Endothelial cell of umbilical vein (primary cell): ENCODE measurements at regions of chr2 and their contacts with region 1.

Region 1: GRCh38 chr2:44955593-44956392 is 14.3 kb downstream of the SIX3 start:
- DNase-seq: peak; percentile 60
- H3K4me3 ChIP-seq: no peak overlapping the region
- H3K27ac ChIP-seq: no peak overlapping the region
- H3K4me1 ChIP-seq: peaks cover 16% of the 10 kb centered on the region
- H3K27me3 ChIP-seq: peaks cover 47 to 52% of the 10 kb centered on the region in 2 experiments
- CTCF ChIP-seq: peak; percentile 86 to 97
- POLR2A ChIP-seq: no peak

Region 2: DNA sequence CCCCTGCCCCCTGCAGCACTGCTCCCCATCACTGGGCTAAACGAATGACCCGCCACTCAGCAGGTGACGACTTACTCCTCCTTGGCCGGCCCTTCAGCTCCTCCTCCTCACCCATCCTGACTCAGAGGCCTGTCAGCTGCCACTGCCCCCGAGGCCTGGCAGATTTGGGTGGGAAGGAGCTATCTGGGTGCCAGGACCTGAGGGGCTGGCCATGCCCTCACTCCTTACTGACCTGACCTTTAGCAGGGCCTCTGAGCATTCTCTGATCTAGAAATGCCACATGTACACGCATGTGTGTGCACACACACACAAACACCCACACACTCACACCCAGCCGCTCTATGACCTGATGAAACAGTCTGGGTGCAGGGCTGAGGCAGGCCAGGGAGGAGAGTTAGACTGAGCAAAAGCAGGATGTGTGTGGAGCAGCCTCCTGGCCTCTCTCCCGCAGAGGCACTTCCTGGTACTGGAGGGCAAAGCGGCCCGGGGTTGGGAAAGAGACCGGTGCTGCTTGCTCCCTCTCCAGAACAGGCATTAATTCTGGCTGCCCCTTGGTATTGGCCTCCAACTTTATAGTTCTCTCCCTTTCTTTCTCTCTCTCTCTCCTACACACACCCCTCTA is 1797.4 kb before region 1 on chr2:
- CTCF ChIA-PET with region 1: no interaction called
- POLR2A ChIA-PET with region 1: no interaction called
- dilution Hi-C with region 1: no loop called
- intact Hi-C with region 1: no loop called
- DNase-seq: peak; percentile 87
- H3K4me3 ChIP-seq: no peak overlapping the region
- H3K27ac ChIP-seq: peak overlapping the region; percentile 23
- H3K4me1 ChIP-seq: peaks cover 13% of the 10 kb centered on the region
- H3K27me3 ChIP-seq: no peaks in the 10 kb centered on the region
- CTCF ChIP-seq: no peak
- POLR2A ChIP-seq: peak; percentile 13

Region 3: DNA sequence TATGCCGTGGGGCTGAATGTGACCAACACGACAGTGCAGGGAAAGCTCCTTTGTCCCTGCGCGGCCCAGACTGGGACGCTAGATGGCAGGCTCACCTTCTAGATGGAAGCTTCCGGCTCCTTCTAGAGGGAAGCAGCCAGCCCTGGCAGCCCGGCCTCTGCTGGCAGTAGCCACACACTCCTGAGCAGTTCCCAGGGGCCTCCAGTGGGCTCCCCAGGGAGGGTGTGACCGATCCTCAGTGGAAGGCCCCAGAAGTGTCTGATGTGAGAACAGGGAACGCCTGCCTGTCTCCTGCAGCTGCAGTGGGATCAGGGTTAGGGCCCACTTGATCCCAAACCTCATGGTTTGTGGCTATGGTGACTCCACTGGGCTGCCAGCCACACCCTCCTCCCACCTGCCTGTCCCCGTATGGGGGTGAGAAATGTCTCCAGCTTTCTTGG is 911.5 kb before region 1 on chr2:
- CTCF ChIA-PET with region 1: interaction called, 67 read pairs
- POLR2A ChIA-PET with region 1: no interaction called
- dilution Hi-C with region 1: no loop called
- intact Hi-C with region 1: loop called (anchors 1 kb)
- DNase-seq: peak; percentile 78
- H3K4me3 ChIP-seq: no peak overlapping the region
- H3K27ac ChIP-seq: no peak overlapping the region
- H3K4me1 ChIP-seq: no peaks in the 10 kb centered on the region
- H3K27me3 ChIP-seq: peaks cover 4 to 5% of the 10 kb centered on the region in 2 experiments
- CTCF ChIP-seq: peak; percentile 87 to 95
- POLR2A ChIP-seq: no peak

Region 4: GRCh38 chr2:44167940-44168680 is 787.7 kb before region 1 on chr2:
- CTCF ChIA-PET with region 1: no interaction called
- POLR2A ChIA-PET with region 1: no interaction called
- dilution Hi-C with region 1: no loop called
- intact Hi-C with region 1: loop called (anchors 2 kb)
- DNase-seq: peak; percentile 100
- H3K4me3 ChIP-seq: peak overlapping the region; percentile 38 to 82 (median 71)
- H3K27ac ChIP-seq: peak overlapping the region; percentile 97
- H3K4me1 ChIP-seq: peaks cover 15% of the 10 kb centered on the region
- H3K27me3 ChIP-seq: peaks cover 0 to 5% of the 10 kb centered on the region in 2 experiments
- CTCF ChIP-seq: no peak
- POLR2A ChIP-seq: no peak

Region 5: DNA sequence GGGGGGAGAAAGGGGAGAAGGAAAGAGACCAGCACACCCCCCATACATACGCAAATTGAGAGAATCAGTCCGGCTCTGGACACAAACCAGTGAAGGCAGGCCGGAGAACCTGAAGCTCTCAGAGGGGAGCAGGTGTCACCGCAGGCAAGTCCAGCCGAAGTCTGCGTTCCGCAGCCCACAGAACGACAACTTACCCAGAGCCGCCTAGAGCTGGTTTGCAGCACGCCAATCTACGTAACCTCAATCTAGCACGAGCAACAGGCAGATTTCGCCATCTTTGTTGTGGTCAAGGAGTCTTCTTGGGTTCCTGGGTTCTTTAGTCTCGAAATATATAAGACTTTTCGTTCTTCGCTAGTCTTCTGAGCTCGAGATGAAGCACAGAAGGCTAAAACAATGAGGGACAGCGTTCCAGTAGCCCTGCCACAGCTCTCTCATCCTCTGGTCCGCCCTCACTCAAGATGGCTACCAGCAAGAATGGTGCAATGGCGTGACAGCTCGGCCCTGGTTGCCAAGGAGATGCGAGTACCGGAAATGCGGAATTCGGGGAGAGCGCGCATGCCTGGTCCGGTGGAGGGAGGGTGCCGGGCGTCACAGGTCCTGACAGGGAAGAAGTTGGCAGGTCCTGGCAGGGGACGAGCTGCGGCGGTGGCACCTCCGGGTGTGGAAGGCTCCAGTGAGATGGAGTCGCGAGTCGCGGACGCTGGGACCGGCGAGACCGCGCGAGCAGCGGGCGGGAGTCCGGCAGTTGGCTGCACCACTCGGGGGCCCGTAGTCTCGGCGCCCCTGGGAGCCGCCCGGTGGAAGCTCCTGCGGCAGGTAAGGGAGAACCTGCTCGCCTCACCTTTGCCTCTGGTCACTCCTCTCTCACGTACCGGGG is 594.2 kb before region 1 on chr2 and contains the starts of genes CAMKMT and PREPL:
- CTCF ChIA-PET with region 1: interaction called, 14 read pairs
- POLR2A ChIA-PET with region 1: no interaction called
- dilution Hi-C with region 1: no loop called
- intact Hi-C with region 1: no loop called
- DNase-seq: peak; percentile 97
- H3K4me3 ChIP-seq: peak within 1 kb of the TSS; percentile 59 to 89 (median 86)
- H3K27ac ChIP-seq: peak within 1 kb of the TSS; percentile 99
- H3K4me1 ChIP-seq: peaks cover 24% of the 10 kb centered on the region
- H3K27me3 ChIP-seq: no peaks in the 10 kb centered on the region
- CTCF ChIP-seq: no peak
- POLR2A ChIP-seq: peak; percentile 82
- total RNA-seq, gene CAMKMT: 8.2 and 10.7 TPM in 2 replicates
- total RNA-seq, gene PREPL: 25.7 and 26.0 TPM in 2 replicates

Region 6: GRCh38 chr2:44543773-44544725 is 411.7 kb before region 1 on chr2:
- CTCF ChIA-PET with region 1: no interaction called
- POLR2A ChIA-PET with region 1: no interaction called
- dilution Hi-C with region 1: no loop called
- intact Hi-C with region 1: no loop called
- DNase-seq: no peak
- H3K4me3 ChIP-seq: no peak overlapping the region
- H3K27ac ChIP-seq: no peak overlapping the region
- H3K4me1 ChIP-seq: peaks cover 8% of the 10 kb centered on the region
- H3K27me3 ChIP-seq: no peaks in the 10 kb centered on the region
- CTCF ChIP-seq: no peak
- POLR2A ChIP-seq: no peak

Region 7: GRCh38 chr2:44850016-44850415 is 105.8 kb before region 1 on chr2:
- CTCF ChIA-PET with region 1: no interaction called
- POLR2A ChIA-PET with region 1: no interaction called
- dilution Hi-C with region 1: no loop called
- intact Hi-C with region 1: no loop called
- DNase-seq: no peak
- H3K4me3 ChIP-seq: no peak overlapping the region
- H3K27ac ChIP-seq: no peak overlapping the region
- H3K4me1 ChIP-seq: no peaks in the 10 kb centered on the region
- H3K27me3 ChIP-seq: peaks cover 3 to 11% of the 10 kb centered on the region in 2 experiments
- CTCF ChIP-seq: no peak
- POLR2A ChIP-seq: no peak

Region 8: GRCh38 chr2:44941551-44942234 is 14.1 kb before region 1 on chr2 and contains the start of gene SIX3:
- CTCF ChIA-PET with region 1: interaction called, 10 read pairs
- POLR2A ChIA-PET with region 1: no interaction called
- dilution Hi-C with region 1: no loop called
- intact Hi-C with region 1: no loop called
- DNase-seq: peak; percentile 37
- H3K4me3 ChIP-seq: peak within 1 kb of the TSS in 2 of 3 experiments; percentile 2 to 21
- H3K27ac ChIP-seq: no peak within 1 kb of the TSS
- H3K4me1 ChIP-seq: no peaks in the 10 kb centered on the region
- H3K27me3 ChIP-seq: peaks cover 82 to 97% of the 10 kb centered on the region in 2 experiments
- CTCF ChIP-seq: no peak
- POLR2A ChIP-seq: no peak
- total RNA-seq, gene SIX3: not detected in 2 replicates